PC-9 (cell line): ENCODE measurements at regions of chr16 and their contacts with region 1.

Region 1: GRCh38 chr16:66706506-66706880 is 9.9 kb upstream of the CMTM4 start:
- DNase-seq: peak in 1 of 2 experiments; percentile 37
- H3K4me3 ChIP-seq: no peak overlapping the region
- H3K27ac ChIP-seq: no peak overlapping the region
- H3K4me1 ChIP-seq: no peaks in the 10 kb centered on the region
- H3K27me3 ChIP-seq: no peaks in the 10 kb centered on the region
- CTCF ChIP-seq: no peak

Region 2: DNA sequence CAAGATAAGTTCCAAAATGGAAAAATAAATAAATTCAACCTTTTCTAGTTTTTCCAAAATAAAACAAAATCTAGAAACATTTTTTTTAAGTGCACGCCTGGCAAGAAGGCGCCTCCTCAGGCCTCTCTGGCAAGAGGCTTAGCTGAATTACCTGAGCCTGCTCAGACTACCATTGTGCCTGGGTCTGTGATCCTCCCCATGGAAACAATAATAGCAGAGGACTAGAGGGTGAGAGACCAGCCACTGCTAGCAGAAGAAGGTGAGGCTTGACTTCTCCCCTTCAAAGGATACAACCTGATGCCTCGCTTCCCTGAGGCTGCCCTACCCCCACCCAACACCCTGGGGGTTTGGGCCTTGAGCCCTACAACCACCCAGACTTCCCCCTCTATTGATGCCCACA is 80.1 kb after region 1 on chr16:
- CTCF ChIA-PET with region 1: no interaction called
- POLR2A ChIA-PET with region 1: interaction called, 14 read pairs
- intact Hi-C with region 1: no loop called
- DNase-seq: no peak
- H3K4me3 ChIP-seq: no peak overlapping the region
- H3K27ac ChIP-seq: no peak overlapping the region
- H3K4me1 ChIP-seq: no peaks in the 10 kb centered on the region
- H3K27me3 ChIP-seq: no peaks in the 10 kb centered on the region
- CTCF ChIP-seq: no peak